GM12878 (cell line): ENCODE measurements at regions of chr7 and their contacts with region 1.

Region 1: DNA sequence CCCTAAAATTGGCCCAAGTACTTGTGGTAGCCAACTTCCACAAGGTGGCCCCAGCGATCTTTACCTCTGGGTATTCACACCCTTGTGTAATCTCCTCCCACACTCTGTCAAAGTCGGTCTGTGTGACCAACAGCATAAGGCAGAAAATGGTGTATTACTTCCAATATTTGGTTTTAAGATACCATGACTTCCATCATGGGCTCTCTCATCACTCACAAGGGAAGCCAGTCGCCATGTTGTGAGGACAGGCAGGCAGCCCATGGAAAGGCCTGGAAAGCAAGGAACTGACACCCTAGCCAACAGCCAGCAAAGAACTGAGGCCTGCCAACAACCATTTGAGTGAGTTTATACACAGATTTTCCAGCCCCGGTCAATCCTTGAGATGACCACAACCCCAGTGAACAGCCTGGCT is 91.0 kb upstream of the KMT2E start:
- DNase-seq: peak; percentile 71
- ATAC-seq: peak; percentile 99
- H3K4me3 ChIP-seq: no peak overlapping the region
- H3K27ac ChIP-seq: no peak overlapping the region
- H3K4me1 ChIP-seq: peaks cover 6% of the 10 kb centered on the region; the same call in 1 of the 2 replicates
- H3K27me3 ChIP-seq: no peaks in the 10 kb centered on the region
- CTCF ChIP-seq: peak; percentile 86 to 98 (median 89); a peak in 5 of 6 replicates
- EP300 ChIP-seq: no peak
- POLR2A ChIP-seq: no peak
- RAD21 ChIP-seq: peak; percentile 97

Region 2: DNA sequence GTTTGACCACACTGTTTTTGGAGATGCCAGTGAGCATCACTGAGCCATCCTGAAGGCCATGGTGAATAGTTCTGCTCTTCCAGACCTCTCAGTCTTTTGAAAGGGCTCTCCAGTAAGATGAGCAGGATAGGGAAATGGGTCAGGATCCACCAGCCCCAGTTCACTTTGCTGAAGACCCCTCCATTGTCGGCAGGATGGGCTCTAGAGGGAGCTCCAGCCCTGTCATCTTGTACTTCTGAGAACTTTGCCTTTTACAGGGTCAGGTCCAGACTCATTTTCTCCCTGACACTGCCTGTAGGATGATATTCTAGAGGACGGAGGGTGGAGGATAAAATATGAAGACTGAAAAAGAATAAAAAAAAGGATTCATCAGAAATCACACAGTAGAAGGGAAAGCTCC is 581.5 kb before region 1 on chr7:
- CTCF ChIA-PET with region 1: interaction called, 8 read pairs
- POLR2A ChIA-PET with region 1: no interaction called
- RAD21 ChIA-PET with region 1: interaction called, 6 read pairs
- SMC1A ChIA-PET with region 1: interaction called, 3 read pairs
- in situ Hi-C with region 1: loop called (anchors 10 kb)
- intact Hi-C with region 1: loop called (anchors 5 kb)
- DNase-seq: no peak
- ATAC-seq: peak; percentile 48
- H3K4me3 ChIP-seq: no peak overlapping the region
- H3K27ac ChIP-seq: no peak overlapping the region
- H3K4me1 ChIP-seq: no peaks in the 10 kb centered on the region
- H3K27me3 ChIP-seq: no peaks in the 10 kb centered on the region
- CTCF ChIP-seq: peak; percentile 23 to 30 (median 29); a peak in 4 of 6 replicates
- EP300 ChIP-seq: no peak
- POLR2A ChIP-seq: no peak
- RAD21 ChIP-seq: peak; percentile 42

Region 3: GRCh38 chr7:104367926-104368325 is 555.1 kb before region 1 on chr7:
- CTCF ChIA-PET with region 1: no interaction called
- POLR2A ChIA-PET with region 1: no interaction called
- RAD21 ChIA-PET with region 1: no interaction called
- SMC1A ChIA-PET with region 1: no interaction called
- in situ Hi-C with region 1: no loop called
- intact Hi-C with region 1: no loop called
- DNase-seq: no peak
- ATAC-seq: no peak
- H3K4me3 ChIP-seq: no peak overlapping the region
- H3K27ac ChIP-seq: no peak overlapping the region
- H3K4me1 ChIP-seq: no peaks in the 10 kb centered on the region
- H3K27me3 ChIP-seq: no peaks in the 10 kb centered on the region; a peak in 1 of 4 replicates
- CTCF ChIP-seq: no peak
- EP300 ChIP-seq: no peak
- POLR2A ChIP-seq: no peak
- RAD21 ChIP-seq: no peak

Region 4: DNA sequence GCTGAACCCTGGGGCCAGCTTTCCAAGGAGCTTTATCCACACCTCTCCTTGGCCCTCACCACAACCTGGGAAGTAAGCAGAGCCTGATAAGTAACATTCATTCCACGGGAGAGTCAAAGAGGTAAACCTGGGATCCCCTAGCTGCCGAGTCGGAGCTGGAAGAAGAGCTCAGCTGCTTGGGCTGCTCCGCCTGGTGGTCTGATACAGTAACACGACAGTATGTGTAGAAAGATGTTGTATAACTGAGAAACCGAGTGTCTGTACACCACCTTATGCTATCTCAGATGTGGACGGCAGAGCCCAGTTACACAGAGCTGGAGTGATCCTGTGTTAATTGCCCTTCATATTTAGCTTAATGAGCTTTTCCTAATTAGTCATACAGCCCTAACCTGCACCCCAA is 60.3 kb before region 1 on chr7:
- CTCF ChIA-PET with region 1: interaction called, 20 read pairs
- POLR2A ChIA-PET with region 1: no interaction called
- RAD21 ChIA-PET with region 1: interaction called, 5 read pairs
- SMC1A ChIA-PET with region 1: interaction called, 4 read pairs
- in situ Hi-C with region 1: no loop called
- intact Hi-C with region 1: no loop called
- DNase-seq: no peak
- ATAC-seq: no peak; the same call in 2 of the 3 replicates
- H3K4me3 ChIP-seq: no peak overlapping the region
- H3K27ac ChIP-seq: no peak overlapping the region
- H3K4me1 ChIP-seq: peaks cover 8% of the 10 kb centered on the region
- H3K27me3 ChIP-seq: no peaks in the 10 kb centered on the region
- CTCF ChIP-seq: no peak
- EP300 ChIP-seq: no peak
- POLR2A ChIP-seq: no peak
- RAD21 ChIP-seq: no peak

Region 5: GRCh38 chr7:104895522-104896236 is 27.3 kb before region 1 on chr7:
- CTCF ChIA-PET with region 1: interaction called, 581 read pairs
- POLR2A ChIA-PET with region 1: interaction called, 3 read pairs
- RAD21 ChIA-PET with region 1: interaction called, 22 read pairs
- SMC1A ChIA-PET with region 1: interaction called, 413 read pairs
- in situ Hi-C with region 1: no loop called
- intact Hi-C with region 1: loop called (anchors 1 kb)
- DNase-seq: peak; percentile 83
- ATAC-seq: peak; percentile 55
- H3K4me3 ChIP-seq: peak overlapping the region; percentile 69
- H3K27ac ChIP-seq: peak overlapping the region; percentile 97
- H3K4me1 ChIP-seq: peaks cover 69% of the 10 kb centered on the region
- H3K27me3 ChIP-seq: no peaks in the 10 kb centered on the region
- CTCF ChIP-seq: no peak
- EP300 ChIP-seq: peak; percentile 58 to 60; a peak in 1 of 4 replicates
- POLR2A ChIP-seq: no peak
- RAD21 ChIP-seq: no peak

Region 6: DNA sequence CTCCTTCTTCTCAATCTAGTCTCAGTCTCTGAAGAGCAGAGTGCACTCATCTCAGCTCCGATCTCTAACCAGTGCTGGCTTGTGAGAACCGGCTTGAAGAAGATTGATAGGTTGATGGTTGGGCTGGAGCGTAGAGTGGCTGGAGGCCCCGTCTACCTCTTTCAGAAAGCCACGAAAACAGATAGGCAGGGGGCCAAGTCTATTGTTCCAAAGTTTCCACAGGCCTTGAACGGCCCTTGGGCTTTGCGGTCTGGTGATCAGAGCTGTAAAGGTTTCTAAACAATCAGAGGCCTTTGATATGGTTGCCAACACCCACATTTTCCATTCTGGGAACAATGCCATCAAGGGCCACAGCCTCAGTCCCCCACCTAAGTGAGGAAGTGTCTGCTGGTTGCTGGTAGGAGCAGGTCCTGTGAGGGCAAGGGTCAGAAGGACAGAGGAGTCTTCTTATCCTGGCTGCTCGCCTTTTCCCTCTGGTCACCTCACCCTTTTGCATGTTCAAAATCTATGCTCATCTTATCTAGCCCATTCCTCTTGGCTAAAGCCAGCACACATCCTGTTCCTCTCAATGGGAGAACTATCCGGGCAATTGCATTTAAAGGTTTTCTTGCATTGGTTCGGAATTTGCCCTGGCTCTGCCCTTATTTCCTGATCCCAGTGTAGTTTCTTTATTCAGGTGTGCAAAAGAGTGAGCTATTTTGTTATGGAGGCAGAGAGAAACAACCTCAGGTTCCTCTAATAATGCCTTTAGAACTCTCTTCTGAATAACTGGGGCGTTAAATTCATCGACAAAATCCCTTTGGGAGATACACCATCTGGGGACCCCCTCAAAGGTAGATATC is 20.7 kb after region 1 on chr7:
- CTCF ChIA-PET with region 1: interaction called, 23 read pairs
- POLR2A ChIA-PET with region 1: interaction called, 4 read pairs
- RAD21 ChIA-PET with region 1: interaction called, 17 read pairs
- SMC1A ChIA-PET with region 1: interaction called, 11 read pairs
- in situ Hi-C with region 1: no loop called
- intact Hi-C with region 1: loop called (anchors 1 kb)
- DNase-seq: peak; percentile 83
- ATAC-seq: peak; percentile 75
- H3K4me3 ChIP-seq: peak overlapping the region; percentile 39; the same call in 1 of the 2 replicates
- H3K27ac ChIP-seq: peak overlapping the region; percentile 93
- H3K4me1 ChIP-seq: peaks cover 39% of the 10 kb centered on the region
- H3K27me3 ChIP-seq: no peaks in the 10 kb centered on the region
- CTCF ChIP-seq: no peak
- EP300 ChIP-seq: peak; percentile 90 to 91
- POLR2A ChIP-seq: peak; percentile 55
- RAD21 ChIP-seq: no peak

Region 7: GRCh38 chr7:105336009-105336408 is 413.0 kb after region 1 on chr7:
- CTCF ChIA-PET with region 1: interaction called, 4 read pairs
- POLR2A ChIA-PET with region 1: no interaction called
- RAD21 ChIA-PET with region 1: interaction called, 4 read pairs
- SMC1A ChIA-PET with region 1: no interaction called
- in situ Hi-C with region 1: no loop called
- intact Hi-C with region 1: loop called (anchors 10 kb)
- DNase-seq: no peak
- ATAC-seq: no peak
- H3K4me3 ChIP-seq: no peak overlapping the region
- H3K27ac ChIP-seq: no peak overlapping the region
- H3K4me1 ChIP-seq: no peaks in the 10 kb centered on the region
- H3K27me3 ChIP-seq: no peaks in the 10 kb centered on the region
- CTCF ChIP-seq: peak in 2 of 3 experiments; percentile 26 to 49; a peak in 2 of 6 replicates
- EP300 ChIP-seq: no peak
- POLR2A ChIP-seq: no peak
- RAD21 ChIP-seq: peak; percentile 26; the same call in 1 of the 2 replicates